Activated naive CD4-positive, alpha-beta T cell treated with anti-CD3 and anti-CD28 coated beads for 36 hours (primary cell): ENCODE measurements at regions of chr11 and their contacts with region 1.

Region 1: GRCh38 chr11:66958232-66958955 is at the start of gene PC:
- DNase-seq: peak; percentile 99
- H3K4me3 Mint-ChIP-seq: peak within 1 kb of the TSS; percentile 83
- H3K27ac Mint-ChIP-seq: peak within 1 kb of the TSS; percentile 17
- H3K4me1 Mint-ChIP-seq: peaks cover 16% of the 10 kb centered on the region
- H3K27me3 Mint-ChIP-seq: no peaks in the 10 kb centered on the region
- total RNA-seq, gene PC: 8.0 to 9.4 TPM

Region 2: GRCh38 chr11:66480117-66480938 is 478.1 kb before region 1 on chr11 and contains the start of gene DPP3:
- CTCF ChIA-PET with region 1: no interaction called
- intact Hi-C with region 1: loop called (anchors 1 kb)
- DNase-seq: peak; percentile 97
- H3K4me3 Mint-ChIP-seq: peak within 1 kb of the TSS; percentile 89
- H3K27ac Mint-ChIP-seq: peak within 1 kb of the TSS; percentile 84
- H3K4me1 Mint-ChIP-seq: peaks cover 25% of the 10 kb centered on the region
- H3K27me3 Mint-ChIP-seq: no peaks in the 10 kb centered on the region
- total RNA-seq, gene DPP3: 73.8 to 80.1 TPM

Region 3: DNA sequence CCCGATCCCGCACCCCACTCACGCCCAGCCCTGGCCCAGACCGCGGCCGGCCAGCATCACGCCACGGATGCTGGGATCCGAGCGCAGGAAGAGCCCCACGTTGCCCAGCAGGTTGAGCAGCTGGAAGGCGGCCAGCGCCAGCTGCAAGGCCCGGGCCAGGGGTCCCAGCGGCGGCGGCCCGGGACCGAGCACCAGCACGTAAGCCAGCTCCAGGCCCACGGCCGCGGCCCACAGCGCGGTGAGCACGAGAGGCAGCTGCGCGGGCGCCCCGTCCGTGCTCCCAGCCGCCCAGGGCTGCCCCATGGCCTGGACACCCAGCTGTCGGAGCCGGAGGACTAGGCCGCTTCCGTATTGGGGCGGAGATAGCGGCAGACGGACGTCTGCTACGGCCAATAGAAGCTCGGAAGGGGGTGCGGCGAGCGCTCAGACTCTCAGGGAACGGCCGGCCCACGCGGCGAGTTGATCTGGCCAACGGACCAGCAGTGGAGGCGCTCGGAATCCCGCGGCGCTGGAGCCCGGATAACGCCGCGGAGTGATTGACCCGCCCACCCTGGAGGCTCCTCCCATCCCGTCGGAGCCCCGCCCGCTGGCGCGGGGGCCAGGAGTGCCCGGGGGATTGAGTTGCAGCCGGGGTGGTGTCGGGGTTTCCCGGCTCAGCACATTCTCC is 412.6 kb before region 1 on chr11 and contains the start of gene ZDHHC24:
- CTCF ChIA-PET with region 1: no interaction called
- intact Hi-C with region 1: loop called (anchors 10 kb)
- DNase-seq: peak; percentile 91
- H3K4me3 Mint-ChIP-seq: peak within 1 kb of the TSS; percentile 75
- H3K27ac Mint-ChIP-seq: peak within 1 kb of the TSS; percentile 30
- H3K4me1 Mint-ChIP-seq: peaks cover 18% of the 10 kb centered on the region
- H3K27me3 Mint-ChIP-seq: no peaks in the 10 kb centered on the region
- total RNA-seq, gene ZDHHC24: 11.5 to 13.4 TPM

Region 4: GRCh38 chr11:66744485-66745340 is 213.7 kb before region 1 on chr11:
- CTCF ChIA-PET with region 1: no interaction called
- intact Hi-C with region 1: loop called (anchors 1 kb)
- DNase-seq: peak; percentile 85
- H3K4me3 Mint-ChIP-seq: peak overlapping the region; percentile 95
- H3K27ac Mint-ChIP-seq: peak overlapping the region; percentile 50
- H3K4me1 Mint-ChIP-seq: peaks cover 1% of the 10 kb centered on the region
- H3K27me3 Mint-ChIP-seq: no peaks in the 10 kb centered on the region

Region 5: DNA sequence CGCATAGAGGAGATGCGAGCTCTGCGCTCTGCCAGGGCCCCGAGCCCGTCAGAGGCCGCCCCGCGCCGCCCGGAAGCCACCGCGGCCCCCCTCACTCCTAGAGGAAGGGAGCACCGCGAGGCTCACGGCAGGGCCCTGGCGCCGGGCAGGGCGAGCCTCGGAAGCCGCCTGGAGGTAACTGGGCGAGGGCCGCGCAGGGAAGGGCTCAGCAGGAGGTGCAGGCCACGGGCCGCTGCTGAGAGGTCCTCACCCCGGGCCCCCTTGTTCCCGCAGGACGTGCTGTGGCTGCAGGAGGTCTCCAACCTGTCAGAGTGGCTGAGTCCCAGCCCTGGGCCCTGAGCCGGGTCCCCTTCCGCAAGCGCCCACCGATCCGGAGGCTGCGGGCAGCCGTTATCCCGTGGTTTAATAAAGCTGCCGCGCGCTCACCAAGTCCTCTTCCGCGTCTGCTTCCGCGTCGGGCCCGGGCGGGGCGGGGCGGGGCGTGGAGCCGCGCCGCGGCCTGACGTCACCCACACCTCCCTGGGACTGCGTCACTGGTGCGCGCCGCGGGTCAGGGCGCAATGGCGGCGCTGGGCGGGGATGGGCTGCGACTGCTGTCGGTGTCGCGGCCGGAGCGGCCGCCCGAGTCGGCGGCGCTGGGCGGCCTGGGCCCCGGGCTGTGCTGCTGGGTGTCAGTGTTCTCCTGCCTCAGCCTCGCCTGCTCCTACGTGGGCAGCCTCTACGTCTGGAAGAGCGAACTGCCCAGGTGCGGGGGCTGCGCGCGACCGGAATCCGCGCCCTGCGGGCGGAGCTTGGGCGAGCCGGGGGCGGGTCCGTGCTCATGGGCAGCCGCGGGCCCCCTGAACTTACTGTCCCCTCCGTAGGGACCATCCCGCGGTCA is 115.3 kb before region 1 on chr11 and contains the start of gene RCE1:
- CTCF ChIA-PET with region 1: no interaction called
- intact Hi-C with region 1: loop called (anchors 2 kb)
- DNase-seq: peak; percentile 91
- H3K4me3 Mint-ChIP-seq: peak within 1 kb of the TSS; percentile 87
- H3K27ac Mint-ChIP-seq: peak within 1 kb of the TSS; percentile 90
- H3K4me1 Mint-ChIP-seq: peaks cover 47% of the 10 kb centered on the region
- H3K27me3 Mint-ChIP-seq: no peaks in the 10 kb centered on the region
- total RNA-seq, gene RCE1: 19.3 to 20.6 TPM

Region 6: GRCh38 chr11:66855574-66856495 is 102.6 kb before region 1 on chr11:
- CTCF ChIA-PET with region 1: no interaction called
- intact Hi-C with region 1: loop called (anchors 5 kb)
- DNase-seq: peak; percentile 89
- H3K4me3 Mint-ChIP-seq: peak overlapping the region; percentile 87
- H3K27ac Mint-ChIP-seq: peak overlapping the region; percentile 30
- H3K4me1 Mint-ChIP-seq: peaks cover 11% of the 10 kb centered on the region
- H3K27me3 Mint-ChIP-seq: no peaks in the 10 kb centered on the region

Region 7: GRCh38 chr11:66996609-66997405 is 38.4 kb after region 1 on chr11:
- CTCF ChIA-PET with region 1: no interaction called
- intact Hi-C with region 1: no loop called
- DNase-seq: no peak
- H3K4me3 Mint-ChIP-seq: no peak overlapping the region
- H3K27ac Mint-ChIP-seq: no peak overlapping the region
- H3K4me1 Mint-ChIP-seq: no peaks in the 10 kb centered on the region
- H3K27me3 Mint-ChIP-seq: no peaks in the 10 kb centered on the region

Region 8: GRCh38 chr11:67082035-67082791 is 123.8 kb after region 1 on chr11:
- CTCF ChIA-PET with region 1: no interaction called
- intact Hi-C with region 1: no loop called
- DNase-seq: peak; percentile 41
- H3K4me3 Mint-ChIP-seq: peak overlapping the region; percentile 47
- H3K27ac Mint-ChIP-seq: no peak overlapping the region
- H3K4me1 Mint-ChIP-seq: peaks cover 19% of the 10 kb centered on the region
- H3K27me3 Mint-ChIP-seq: peaks cover 4% of the 10 kb centered on the region

Region 9: DNA sequence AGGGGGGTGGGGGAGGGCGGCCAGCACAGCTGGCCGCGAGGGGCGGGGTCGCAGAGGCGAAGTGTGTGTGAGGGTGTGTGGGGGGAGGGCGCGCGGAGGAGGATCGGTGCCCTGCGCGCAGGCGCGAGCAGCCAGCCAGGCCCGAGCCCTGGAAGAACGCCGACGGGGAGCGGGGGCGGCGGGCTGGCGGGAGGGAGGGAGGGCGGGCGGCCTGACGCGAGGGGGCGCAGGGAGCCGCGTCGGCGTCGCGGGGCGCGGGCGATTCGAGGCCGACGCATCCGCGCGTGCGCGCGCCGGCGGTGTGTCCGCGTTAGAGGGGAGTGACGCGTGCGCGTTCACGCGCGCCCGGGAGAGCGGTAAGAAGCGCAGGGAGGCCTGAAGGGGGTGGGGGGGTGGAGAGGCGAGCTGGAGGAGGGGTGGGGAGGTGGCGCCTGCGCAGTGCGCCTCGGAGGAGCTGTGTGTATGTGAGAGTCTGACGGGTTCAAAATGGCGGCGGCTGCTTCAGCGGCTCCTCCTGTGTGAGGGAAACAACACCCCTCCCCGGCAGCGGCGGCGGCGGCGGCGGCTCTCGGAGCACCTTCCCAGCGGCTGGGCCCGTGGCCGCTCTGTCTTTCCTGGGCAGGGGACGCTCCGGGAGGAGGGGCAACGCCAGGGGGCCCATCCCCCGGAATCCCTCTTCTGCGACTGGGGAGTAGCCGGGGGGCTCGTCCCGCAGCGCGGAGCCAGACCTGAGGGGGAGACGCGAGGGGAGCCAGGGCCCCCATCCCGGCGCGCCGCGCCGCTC is 160.6 kb after region 1 on chr11 and contains the start of gene KDM2A:
- CTCF ChIA-PET with region 1: no interaction called
- intact Hi-C with region 1: loop called (anchors 2 kb)
- DNase-seq: peak; percentile 99
- H3K4me3 Mint-ChIP-seq: peak within 1 kb of the TSS; percentile 97
- H3K27ac Mint-ChIP-seq: peak within 1 kb of the TSS; percentile 92
- H3K4me1 Mint-ChIP-seq: peaks cover 41% of the 10 kb centered on the region
- H3K27me3 Mint-ChIP-seq: no peaks in the 10 kb centered on the region
- total RNA-seq, gene KDM2A: 57.7 to 58.8 TPM